ENCODE measurements at regions of chr16 and their contacts with region 1.

Region 1: DNA sequence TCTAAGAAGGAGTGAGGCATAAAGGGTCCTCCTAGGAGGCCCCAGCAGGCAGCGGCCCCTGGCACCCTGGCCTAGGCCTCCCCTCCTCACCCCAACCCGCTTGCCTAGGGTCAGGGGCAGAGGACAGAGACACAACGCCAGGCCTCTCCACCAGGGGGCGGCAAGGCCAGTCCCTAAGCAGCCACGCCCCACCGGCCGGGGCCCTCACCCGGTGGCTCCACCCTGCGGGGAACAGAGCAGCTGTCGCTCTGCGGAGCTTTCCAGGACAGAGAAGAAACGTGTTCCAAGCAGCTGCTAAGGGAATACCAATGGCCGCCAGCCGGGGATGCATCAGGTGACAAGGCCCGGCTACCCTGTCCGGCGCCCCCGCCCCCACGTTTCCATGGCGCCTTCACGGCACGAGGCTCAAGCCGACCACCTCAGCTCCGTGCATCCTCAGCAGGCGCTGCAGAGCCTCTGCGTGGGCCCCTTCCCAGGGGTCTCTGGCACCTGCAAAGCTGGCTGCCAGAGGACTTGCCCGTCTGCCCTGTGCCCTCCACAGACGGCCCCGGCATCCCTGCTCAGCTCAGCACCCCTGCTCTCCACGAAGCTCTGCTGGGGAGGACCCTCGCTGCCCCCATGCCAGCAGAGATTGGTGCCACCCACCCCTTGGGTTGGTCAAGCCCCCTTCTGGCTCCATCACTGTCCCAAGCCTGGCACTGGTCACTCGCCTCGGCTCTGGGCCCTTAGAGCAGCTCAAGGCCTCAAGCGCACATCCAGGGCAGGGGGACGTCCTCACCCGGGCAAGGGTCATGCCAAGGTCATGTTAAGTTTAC is 5.6 kb downstream of the ZNF598 start:
- DNase-seq: peak; percentile 99
- H3K4me3 ChIP-seq: no peak overlapping the region; a peak in 1 of 4 replicates
- H3K27ac ChIP-seq: peak overlapping the region in 1 of 2 experiments; percentile 48; a peak in 2 of 4 replicates
- H3K4me1 ChIP-seq: peaks cover 24 to 54% of the 10 kb centered on the region in 2 experiments; a peak in 3 of 4 replicates
- H3K27me3 ChIP-seq: no peaks in the 10 kb centered on the region
- CTCF ChIP-seq: peak; percentile 91
- EP300 ChIP-seq: no peak
- RAD21 ChIP-seq: peak; percentile 59

Region 2: GRCh38 chr16:1971796-1972489 is 32.1 kb before region 1 on chr16 and contains the start of gene TBL3:
- CTCF ChIA-PET with region 1: interaction called, 15 read pairs
- POLR2A ChIA-PET with region 1: no interaction called
- DNase-seq: peak; percentile 98
- H3K4me3 ChIP-seq: peak within 1 kb of the TSS; percentile 75 to 88
- H3K27ac ChIP-seq: peak within 1 kb of the TSS; percentile 93 to 98
- H3K4me1 ChIP-seq: peaks cover 0 to 9% of the 10 kb centered on the region in 2 experiments; a peak in 1 of 4 replicates
- H3K27me3 ChIP-seq: no peaks in the 10 kb centered on the region
- CTCF ChIP-seq: no peak
- EP300 ChIP-seq: no peak
- RAD21 ChIP-seq: no peak
- polyA plus RNA-seq, gene TBL3: 36.7 and 37.1 TPM in 2 replicates

Region 3: DNA sequence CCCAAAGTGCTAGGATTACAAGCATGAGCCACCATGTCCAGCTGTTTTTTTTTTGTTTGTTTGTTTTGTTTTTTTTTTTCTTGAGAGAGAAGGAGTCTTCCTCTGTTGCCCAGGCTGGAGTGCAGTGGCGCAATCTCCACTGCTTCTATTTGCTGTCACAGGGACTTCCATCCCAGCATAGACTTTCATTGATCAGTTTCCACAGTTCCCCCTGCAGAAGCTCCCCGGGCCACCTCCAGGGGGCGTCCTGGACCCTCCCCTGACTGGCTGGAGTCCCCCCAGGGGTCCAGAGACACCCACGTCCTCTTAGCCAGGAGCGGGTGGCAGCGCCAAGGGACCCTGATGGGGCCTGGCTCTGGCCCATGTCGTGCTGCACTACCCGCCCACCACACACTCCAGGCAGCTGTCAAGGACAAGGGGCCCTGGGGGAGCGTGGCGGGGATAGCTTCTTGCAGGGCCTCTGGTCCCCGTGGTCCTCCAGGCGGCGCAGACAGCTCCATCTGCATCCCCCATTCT is 12.4 kb after region 1 on chr16:
- CTCF ChIA-PET with region 1: interaction called, 17 read pairs
- POLR2A ChIA-PET with region 1: no interaction called
- DNase-seq: peak; percentile 77
- H3K4me3 ChIP-seq: no peak overlapping the region; a peak in 1 of 4 replicates
- H3K27ac ChIP-seq: no peak overlapping the region
- H3K4me1 ChIP-seq: no peaks in the 10 kb centered on the region; a peak in 1 of 4 replicates
- H3K27me3 ChIP-seq: peaks cover 4% of the 10 kb centered on the region; the same call in 1 of the 2 replicates
- CTCF ChIP-seq: peak; percentile 64
- EP300 ChIP-seq: no peak
- RAD21 ChIP-seq: no peak

Region 4: GRCh38 chr16:2047330-2048115 is 43.5 kb after region 1 on chr16 and contains the starts of genes NTHL1 and TSC2:
- CTCF ChIA-PET with region 1: interaction called, 20 read pairs
- POLR2A ChIA-PET with region 1: no interaction called
- DNase-seq: peak; percentile 97
- H3K4me3 ChIP-seq: peak within 1 kb of the TSS; percentile 71 to 76
- H3K27ac ChIP-seq: peak within 1 kb of the TSS; percentile 33 to 69; a peak in 3 of 4 replicates
- H3K4me1 ChIP-seq: peaks cover 4 to 20% of the 10 kb centered on the region in 2 experiments; a peak in 3 of 4 replicates
- H3K27me3 ChIP-seq: no peaks in the 10 kb centered on the region
- CTCF ChIP-seq: peak; percentile 28; the same call in 1 of the 2 replicates
- EP300 ChIP-seq: no peak; a peak in 1 of 4 replicates
- RAD21 ChIP-seq: no peak; the same call in 1 of the 2 replicates
- polyA plus RNA-seq, gene NTHL1: 72.9 and 77.3 TPM in 2 replicates
- polyA plus RNA-seq, gene TSC2: 76.7 and 96.1 TPM in 2 replicates

Region 5: GRCh38 chr16:2155091-2156021 is 151.3 kb after region 1 on chr16 and contains the start of gene TRAF7:
- CTCF ChIA-PET with region 1: interaction called, 26 read pairs
- POLR2A ChIA-PET with region 1: interaction called, 8 read pairs
- DNase-seq: peak; percentile 96
- H3K4me3 ChIP-seq: peak within 1 kb of the TSS; percentile 100
- H3K27ac ChIP-seq: peak within 1 kb of the TSS; percentile 61 to 89; a peak in 3 of 4 replicates
- H3K4me1 ChIP-seq: peaks cover 37 to 67% of the 10 kb centered on the region in 2 experiments; a peak in 3 of 4 replicates
- H3K27me3 ChIP-seq: no peaks in the 10 kb centered on the region
- CTCF ChIP-seq: no peak
- EP300 ChIP-seq: peak in 1 of 2 experiments; percentile 26; a peak in 1 of 4 replicates
- RAD21 ChIP-seq: no peak
- polyA plus RNA-seq, gene TRAF7: 69.9 and 73.0 TPM in 2 replicates

Measured in SK-N-SH (cell line).